ENCODE measurements at regions of chr10 and their contacts with region 1.

Region 1: GRCh38 chr10:79149662-79150443 is 81.1 kb downstream of the ZMIZ1 start:
- DNase-seq: peak; percentile 87 to 95 (median 92)
- ATAC-seq: peak; percentile 38 to 68 (median 64)
- H3K4me3 ChIP-seq: peak overlapping the region in 2 of 12 donors; percentile 1 to 4
- H3K27ac ChIP-seq: peak overlapping the region; percentile 88 to 98 (median 94)
- H3K4me1 ChIP-seq: peaks cover 69 to 100% (median 100%) of the 10 kb centered on the region in 12 donors
- H3K27me3 ChIP-seq: no peaks in the 10 kb centered on the region
- CTCF ChIP-seq: peak in 2 of 12 donors; percentile 7 to 14
- POLR2A ChIP-seq: peak in 1 of 2 donors; percentile 18

Region 2: GRCh38 chr10:79184145-79184625 is 34.3 kb after region 1 on chr10:
- intact Hi-C with region 1: loop called in 1 of 10 experiments (anchors 5 kb)
- DNase-seq: no peak
- ATAC-seq: peak in 3 of 4 donors; percentile 8 to 33 (median 9)
- H3K4me3 ChIP-seq: no peak overlapping the region
- H3K27ac ChIP-seq: peak overlapping the region in 11 of 12 donors; percentile 30 to 79 (median 67)
- H3K4me1 ChIP-seq: peaks cover 40 to 100% (median 95%) of the 10 kb centered on the region in 12 donors
- H3K27me3 ChIP-seq: no peaks in the 10 kb centered on the region
- CTCF ChIP-seq: no peak
- POLR2A ChIP-seq: no peak

Region 3: DNA sequence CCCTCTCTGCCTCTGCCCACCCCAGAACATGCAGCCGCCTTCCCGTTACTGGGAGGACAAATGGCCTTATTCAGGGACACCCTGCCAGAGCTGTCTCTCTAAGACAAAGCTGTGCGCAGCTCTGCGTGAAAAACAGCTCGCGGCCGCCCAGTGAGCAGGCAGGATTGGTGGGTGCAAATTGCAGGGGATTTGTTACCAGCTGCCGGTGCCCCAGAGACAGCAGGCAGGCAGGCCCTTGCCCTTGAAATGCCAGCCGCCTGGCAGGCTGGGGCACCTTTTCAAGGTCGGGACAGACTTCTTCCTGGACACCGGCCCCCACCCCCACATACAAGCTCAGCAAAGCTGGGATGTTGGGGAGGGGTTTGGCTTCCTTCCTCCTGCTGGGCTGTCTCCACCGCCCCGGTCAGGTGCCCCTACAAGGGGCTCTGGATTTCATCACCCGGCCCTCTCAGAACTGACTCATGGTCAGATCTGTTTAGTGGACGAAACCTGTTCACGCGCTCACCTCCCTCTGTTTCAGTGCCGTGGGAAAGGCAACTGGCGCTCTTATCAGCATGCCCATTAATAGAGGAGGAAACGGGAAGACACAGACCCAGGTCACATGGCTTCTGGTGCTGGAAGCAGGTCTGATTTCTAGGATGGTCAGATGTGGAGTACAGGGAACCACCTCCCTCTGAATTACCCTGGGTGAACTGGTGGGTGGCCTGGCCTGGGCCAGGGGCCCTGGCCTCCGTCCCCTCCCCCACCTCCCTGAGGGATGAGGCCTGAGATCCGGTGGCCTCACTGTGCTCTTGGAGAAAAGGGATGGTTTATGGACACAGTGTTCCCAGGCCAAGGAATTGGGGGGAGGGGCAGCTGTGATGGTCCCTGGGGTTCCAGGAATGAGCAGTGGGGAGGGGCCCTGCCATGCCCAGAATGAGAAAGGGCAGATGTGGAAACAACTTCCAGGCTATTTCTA is 73.5 kb after region 1 on chr10:
- intact Hi-C with region 1: no loop called
- DNase-seq: peak; percentile 80 to 92 (median 84)
- ATAC-seq: peak; percentile 69 to 75 (median 72)
- H3K4me3 ChIP-seq: no peak overlapping the region
- H3K27ac ChIP-seq: peak overlapping the region; percentile 48 to 95 (median 90)
- H3K4me1 ChIP-seq: peaks cover 38 to 76% (median 62%) of the 10 kb centered on the region in 12 donors
- H3K27me3 ChIP-seq: no peaks in the 10 kb centered on the region
- CTCF ChIP-seq: no peak
- POLR2A ChIP-seq: no peak

Measured in heart left ventricle (tissue), 16 donors.